HCT116 (cell line): ENCODE measurements at regions of chr3 and their contacts with region 1.

Region 1: DNA sequence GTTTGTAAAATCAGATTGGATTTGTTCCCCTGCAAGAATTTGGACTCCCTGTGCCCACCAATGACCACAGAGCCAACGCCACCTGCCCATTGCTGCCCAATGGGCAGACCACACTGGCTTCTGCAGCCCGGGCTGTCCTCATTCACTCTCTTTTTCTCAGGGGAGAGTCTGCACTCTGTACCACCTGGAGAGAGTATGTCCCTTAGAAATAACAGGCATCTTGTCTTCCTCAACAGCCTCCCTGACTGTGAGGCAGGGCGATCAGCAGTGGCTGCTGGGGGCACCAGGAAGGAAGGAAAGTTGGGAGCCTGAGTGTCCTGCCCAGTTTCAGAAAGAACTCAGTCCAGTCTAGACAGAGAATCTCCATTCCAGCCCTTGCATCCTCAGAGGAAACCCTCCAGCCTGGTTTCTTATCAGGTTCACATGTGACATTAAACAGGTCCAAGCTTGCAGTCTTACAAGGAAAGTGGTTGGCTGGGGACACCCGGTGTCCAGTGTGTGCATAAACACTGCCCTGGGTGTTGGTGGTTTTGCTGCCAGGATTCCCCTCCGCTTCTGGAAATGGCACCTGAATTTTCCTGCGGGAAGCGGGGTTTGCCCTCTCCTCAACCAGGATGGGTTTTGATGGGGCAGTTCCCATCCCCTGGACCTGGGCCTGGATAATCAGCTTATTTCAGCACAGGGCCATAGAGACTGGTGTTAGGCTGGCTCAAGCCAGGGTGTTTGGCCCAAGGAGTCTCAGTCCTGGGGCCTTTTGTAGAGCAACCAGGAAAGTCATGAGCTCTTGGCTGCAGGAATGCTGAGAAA is 37.2 kb downstream of the SSUH2 start:
- DNase-seq: peak; percentile 15
- ATAC-seq: peak; percentile 77
- H3K4me3 ChIP-seq: no peak overlapping the region
- H3K27ac ChIP-seq: no peak overlapping the region
- H3K4me1 ChIP-seq: no peaks in the 10 kb centered on the region
- H3K27me3 ChIP-seq: no peaks in the 10 kb centered on the region; the same call in 1 of the 2 replicates
- CTCF ChIP-seq: peak; percentile 40 to 56 (median 52); a peak in 4 of 6 replicates
- POLR2A ChIP-seq: no peak
- RAD21 ChIP-seq: peak; percentile 77

Region 2: DNA sequence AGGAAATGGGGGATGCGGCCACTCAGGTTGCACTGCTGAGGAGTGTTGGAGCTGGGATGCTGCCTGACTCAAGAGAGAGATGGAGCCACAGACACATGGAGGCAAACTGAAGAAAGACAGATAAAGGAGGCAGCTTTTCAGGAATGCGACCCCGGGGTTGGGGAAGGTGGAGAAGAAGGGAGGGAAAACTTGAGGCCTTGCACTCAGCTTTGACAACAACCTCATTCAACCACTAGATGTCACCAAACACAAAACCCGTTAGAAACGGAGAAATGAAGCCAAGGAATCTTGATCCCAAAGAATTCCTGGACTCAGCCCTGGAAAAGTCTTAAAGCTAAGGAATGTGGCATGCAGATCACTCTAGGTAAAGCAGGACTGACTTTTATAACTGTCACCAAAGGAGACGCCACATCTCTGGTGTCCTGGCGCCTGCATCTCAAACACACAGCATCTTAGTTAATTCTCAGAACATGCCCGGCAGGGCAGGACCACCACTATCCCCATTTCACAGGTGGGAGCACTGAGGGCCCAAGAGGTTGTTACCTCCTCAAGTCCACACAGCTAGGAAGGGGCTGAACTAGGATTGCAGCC is 165.4 kb before region 1 on chr3:
- CTCF ChIA-PET with region 1: interaction called, 7 read pairs
- POLR2A ChIA-PET with region 1: no interaction called
- RAD21 ChIA-PET with region 1: no interaction called
- intact Hi-C with region 1: loop called (anchors 1 kb)
- DNase-seq: peak; percentile 39
- ATAC-seq: peak; percentile 70
- H3K4me3 ChIP-seq: no peak overlapping the region
- H3K27ac ChIP-seq: no peak overlapping the region
- H3K4me1 ChIP-seq: peaks cover 9 to 24% of the 10 kb centered on the region in 2 experiments; a peak in 3 of 4 replicates
- H3K27me3 ChIP-seq: no peaks in the 10 kb centered on the region
- CTCF ChIP-seq: peak; percentile 71 to 80 (median 73)
- POLR2A ChIP-seq: no peak
- RAD21 ChIP-seq: peak; percentile 85

Region 3: DNA sequence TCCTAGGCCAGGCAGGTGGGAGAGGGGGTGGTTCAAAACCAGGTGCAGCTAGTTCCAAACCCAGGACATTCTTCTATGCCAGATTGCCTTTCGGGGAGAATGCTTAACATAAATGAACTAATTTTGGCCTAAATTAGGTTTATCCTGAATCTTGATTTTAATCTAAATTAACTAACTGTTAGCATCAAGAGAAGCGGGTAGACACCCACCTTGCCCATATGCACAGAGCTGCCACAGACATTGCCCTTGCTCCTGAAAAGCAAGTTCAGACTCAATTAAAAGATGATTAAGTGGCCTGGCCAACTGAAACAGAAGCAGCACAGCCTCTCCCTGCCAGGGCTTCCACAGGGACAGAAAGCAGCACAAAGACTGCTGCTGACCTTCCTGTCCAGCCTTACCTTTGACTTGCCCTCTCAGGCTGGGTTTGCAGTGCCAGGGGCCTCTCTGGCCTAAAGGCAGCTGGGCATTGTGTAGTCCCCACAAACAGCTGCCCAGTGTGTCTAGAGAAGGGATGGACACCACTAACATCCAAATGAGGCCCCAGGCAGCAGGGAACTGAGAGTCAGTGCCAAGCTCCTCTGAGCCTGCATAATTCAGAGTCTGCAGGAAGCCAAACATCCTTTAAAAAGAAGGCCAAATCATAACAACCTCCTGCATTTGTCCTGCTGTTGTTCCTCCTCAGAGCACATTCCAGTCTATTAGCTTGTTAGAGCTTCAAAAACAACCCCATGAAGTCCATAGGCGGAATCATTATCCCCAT is 177.4 kb after region 1 on chr3:
- CTCF ChIA-PET with region 1: no interaction called
- POLR2A ChIA-PET with region 1: no interaction called
- RAD21 ChIA-PET with region 1: no interaction called
- intact Hi-C with region 1: no loop called
- DNase-seq: no peak
- ATAC-seq: no peak
- H3K4me3 ChIP-seq: no peak overlapping the region
- H3K27ac ChIP-seq: no peak overlapping the region
- H3K4me1 ChIP-seq: no peaks in the 10 kb centered on the region
- H3K27me3 ChIP-seq: no peaks in the 10 kb centered on the region
- CTCF ChIP-seq: no peak
- POLR2A ChIP-seq: no peak
- RAD21 ChIP-seq: no peak